ENCODE measurements at regions of chr18 and their contacts with region 1.

Region 1: GRCh38 chr18:75884728-75885127 is 457.2 kb upstream of the SMIM21 start:
- DNase-seq: no peak

Region 2: DNA sequence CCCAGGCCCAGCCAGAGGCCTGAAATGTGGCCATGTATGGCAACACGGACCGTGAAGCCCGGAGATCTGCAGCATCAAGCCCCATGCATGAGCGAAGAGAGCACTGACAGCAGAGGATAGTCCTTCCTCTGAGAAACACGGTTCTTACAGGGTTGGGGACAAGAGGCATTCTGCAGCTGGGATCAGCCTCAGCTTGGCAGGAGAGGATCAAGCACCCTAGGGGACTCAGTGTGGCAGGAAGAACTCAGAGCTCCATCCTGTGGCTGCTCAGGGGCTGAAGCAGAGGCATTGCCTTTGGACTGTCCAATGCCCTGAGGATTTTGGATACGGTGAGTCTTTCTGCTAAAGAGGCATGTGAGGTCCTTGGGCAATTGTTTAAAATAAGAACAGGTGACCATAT is 241.6 kb after region 1 on chr18:
- intact Hi-C with region 1: loop called (anchors 5 kb)
- DNase-seq: no peak

Region 3: GRCh38 chr18:76349067-76349715 is 464.5 kb after region 1 on chr18:
- intact Hi-C with region 1: loop called (anchors 5 kb)
- DNase-seq: no peak